HCT116 (cell line): ENCODE measurements at regions of chr1 and their contacts with region 1.

Region 1: DNA sequence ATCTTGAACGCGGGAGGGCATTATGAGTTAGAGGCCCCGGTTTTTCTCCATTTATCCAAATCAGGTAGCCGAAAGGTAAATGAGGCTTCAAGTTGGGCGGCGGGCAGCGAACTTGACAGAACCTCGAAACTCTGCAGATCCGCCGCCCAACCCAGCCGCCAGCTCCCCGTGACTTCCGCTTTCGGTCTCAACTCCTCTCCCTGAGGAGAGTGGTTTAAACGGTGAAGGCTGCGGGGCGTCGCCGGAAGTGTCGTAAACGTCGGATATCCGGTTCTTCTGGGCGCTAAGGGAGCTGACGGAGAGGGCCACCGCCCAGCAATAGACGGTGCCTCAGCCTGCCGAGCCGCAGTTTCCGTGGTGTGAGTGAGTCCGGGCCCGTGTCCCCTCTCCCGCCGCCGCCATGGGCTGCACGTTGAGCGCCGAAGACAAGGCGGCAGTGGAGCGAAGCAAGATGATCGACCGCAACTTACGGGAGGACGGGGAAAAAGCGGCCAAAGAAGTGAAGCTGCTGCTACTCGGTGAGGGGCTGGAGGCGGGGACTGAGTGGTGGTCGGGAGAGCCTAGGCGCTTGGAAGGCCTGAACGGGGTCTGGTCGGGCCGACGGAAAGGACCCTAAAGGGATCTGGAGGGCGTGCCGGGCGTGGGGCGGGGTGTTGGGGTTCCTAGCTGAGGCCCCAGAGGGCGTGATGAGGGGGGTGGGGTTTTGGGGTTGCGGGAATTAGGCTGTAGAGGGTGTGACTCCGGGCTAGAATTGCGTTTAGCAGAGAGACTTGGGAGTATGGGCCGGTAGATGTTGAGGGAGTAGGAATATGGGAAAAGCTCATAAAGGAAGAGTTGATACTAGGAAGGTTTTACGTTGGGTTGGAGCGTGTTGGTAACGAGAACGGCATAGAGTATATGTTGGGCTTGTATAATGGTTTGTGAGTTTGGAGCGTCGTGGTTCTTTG is at the start of gene GNAI3:
- DNase-seq: peak; percentile 92
- ATAC-seq: peak; percentile 91
- H3K4me3 ChIP-seq: peak within 1 kb of the TSS; percentile 86 to 98
- H3K27ac ChIP-seq: peak within 1 kb of the TSS; percentile 70
- H3K4me1 ChIP-seq: peaks cover 15 to 24% of the 10 kb centered on the region in 2 experiments
- H3K27me3 ChIP-seq: no peaks in the 10 kb centered on the region
- CTCF ChIP-seq: no peak
- POLR2A ChIP-seq: peak; percentile 95
- RAD21 ChIP-seq: no peak
- total RNA-seq, gene GNAI3: 9.5 TPM

Region 2: DNA sequence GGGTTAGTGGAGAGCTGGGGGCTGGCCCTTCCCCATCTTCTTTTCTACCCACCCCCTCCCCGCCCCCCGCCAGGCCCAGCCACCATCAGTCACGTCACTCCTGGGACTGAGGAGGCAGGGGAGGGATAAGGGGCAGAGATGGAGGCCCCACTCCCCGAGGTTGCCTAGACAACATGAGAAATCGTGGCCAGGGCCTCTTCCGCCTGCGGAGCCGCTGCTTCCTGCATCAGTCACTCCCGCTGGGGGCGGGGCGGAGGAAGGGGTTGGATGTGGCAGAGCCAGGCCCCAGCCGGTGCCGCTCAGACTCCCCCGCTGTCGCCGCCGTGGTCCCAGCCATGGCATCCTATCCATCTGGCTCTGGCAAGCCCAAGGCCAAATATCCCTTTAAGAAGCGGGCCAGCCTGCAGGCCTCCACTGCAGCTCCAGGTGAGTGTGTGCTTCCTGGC is 72.3 kb after region 1 on chr1:
- CTCF ChIA-PET with region 1: interaction called, 4 read pairs
- POLR2A ChIA-PET with region 1: interaction called, 17 read pairs
- RAD21 ChIA-PET with region 1: no interaction called
- intact Hi-C with region 1: no loop called
- DNase-seq: peak; percentile 48
- ATAC-seq: peak; percentile 80
- H3K4me3 ChIP-seq: peak overlapping the region; percentile 88 to 95
- H3K27ac ChIP-seq: peak overlapping the region; percentile 86
- H3K4me1 ChIP-seq: peaks cover 30 to 47% of the 10 kb centered on the region in 2 experiments; a peak in 3 of 4 replicates
- H3K27me3 ChIP-seq: no peaks in the 10 kb centered on the region
- CTCF ChIP-seq: no peak
- POLR2A ChIP-seq: no peak
- RAD21 ChIP-seq: no peak

Region 3: DNA sequence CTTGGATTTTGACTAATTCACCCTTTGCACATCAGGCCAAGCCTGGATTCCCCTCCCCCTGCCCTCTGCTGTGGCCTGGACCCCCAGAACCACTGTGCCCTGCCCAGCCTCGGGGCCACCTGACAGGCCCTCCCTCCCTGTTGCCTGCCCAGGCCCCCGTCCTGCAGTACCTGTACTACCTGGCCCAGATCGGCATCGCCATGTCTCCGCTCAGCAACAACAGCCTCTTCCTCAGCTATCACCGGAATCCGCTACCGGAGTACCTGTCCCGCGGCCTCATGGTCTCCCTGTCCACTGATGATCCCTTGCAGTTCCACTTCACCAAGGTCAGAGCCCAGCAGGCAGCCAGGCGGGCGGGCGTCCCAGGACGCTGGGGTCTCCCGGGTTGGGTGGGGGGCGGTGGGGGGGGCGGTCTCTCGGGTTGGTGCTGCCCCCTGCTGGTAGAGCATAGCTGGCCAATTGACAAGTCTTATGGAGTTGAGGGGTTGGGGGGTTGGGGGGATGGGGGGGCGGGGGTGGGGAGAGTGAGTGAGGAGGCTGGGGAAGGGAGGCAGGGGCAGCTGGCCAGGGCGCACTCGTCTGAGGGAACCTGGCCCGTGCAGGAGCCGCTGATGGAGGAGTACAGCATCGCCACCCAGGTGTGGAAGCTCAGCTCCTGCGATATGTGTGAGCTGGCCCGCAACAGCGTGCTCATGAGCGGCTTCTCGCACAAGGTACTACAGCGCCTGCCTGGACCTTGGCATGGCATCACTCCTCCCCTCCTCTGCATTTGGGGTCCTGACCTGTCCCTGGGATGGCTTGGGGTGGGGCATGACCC is 81.7 kb after region 1 on chr1:
- CTCF ChIA-PET with region 1: interaction called, 25 read pairs
- POLR2A ChIA-PET with region 1: interaction called, 5 read pairs
- RAD21 ChIA-PET with region 1: interaction called in 1 of 2 experiments, 8 read pairs
- intact Hi-C with region 1: loop called (anchors 1 kb)
- DNase-seq: no peak
- ATAC-seq: peak; percentile 28
- H3K4me3 ChIP-seq: no peak overlapping the region
- H3K27ac ChIP-seq: no peak overlapping the region
- H3K4me1 ChIP-seq: peaks cover 0 to 9% of the 10 kb centered on the region in 2 experiments; a peak in 1 of 4 replicates
- H3K27me3 ChIP-seq: no peaks in the 10 kb centered on the region
- CTCF ChIP-seq: peak in 1 of 3 experiments; percentile 9; a peak in 1 of 6 replicates
- POLR2A ChIP-seq: no peak
- RAD21 ChIP-seq: no peak

Region 4: DNA sequence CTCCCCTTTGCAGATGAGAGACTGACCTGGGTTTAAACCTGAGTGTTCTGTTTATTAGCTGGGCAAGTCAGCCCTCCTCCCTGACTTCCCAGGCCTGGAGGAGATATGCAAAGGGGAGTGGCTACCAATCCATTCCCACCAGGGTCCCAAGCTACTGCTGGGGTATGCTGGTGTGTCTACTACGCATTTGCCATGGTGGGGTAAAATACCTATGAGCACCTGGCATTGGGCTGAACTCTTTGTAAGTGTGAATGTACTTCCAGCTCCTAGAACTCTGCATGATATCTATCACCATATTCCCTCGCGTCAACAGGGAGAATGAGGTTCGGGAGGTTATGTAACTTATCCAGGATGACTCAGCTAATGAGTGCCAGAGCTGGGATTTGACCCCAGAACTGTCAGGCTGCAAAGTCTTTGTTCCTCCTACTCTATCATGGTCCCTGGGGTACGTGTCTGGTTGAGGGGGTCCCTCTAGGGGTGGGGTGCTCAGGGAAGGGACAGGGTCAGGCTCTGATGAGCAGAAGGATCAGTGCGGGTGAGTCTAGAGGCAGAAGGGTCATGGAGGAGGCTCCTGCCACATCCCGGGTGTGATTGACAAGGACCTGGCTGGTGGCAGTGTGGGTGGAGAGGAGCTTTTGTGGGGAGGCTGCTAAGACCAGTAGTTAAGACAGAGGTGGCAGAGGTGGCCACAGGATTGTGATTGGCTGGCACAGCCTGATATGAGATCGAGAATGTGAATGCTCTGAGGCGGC is 87.8 kb after region 1 on chr1:
- CTCF ChIA-PET with region 1: interaction called, 50 read pairs
- POLR2A ChIA-PET with region 1: interaction called, 11 read pairs
- RAD21 ChIA-PET with region 1: interaction called, 8 to 11 read pairs
- intact Hi-C with region 1: loop called (anchors 2 kb)
- DNase-seq: no peak
- ATAC-seq: peak; percentile 41; the same call in 1 of the 2 replicates
- H3K4me3 ChIP-seq: no peak overlapping the region
- H3K27ac ChIP-seq: no peak overlapping the region; the same call in 1 of the 2 replicates
- H3K4me1 ChIP-seq: peaks cover 12 to 19% of the 10 kb centered on the region in 2 experiments
- H3K27me3 ChIP-seq: no peaks in the 10 kb centered on the region
- CTCF ChIP-seq: no peak
- POLR2A ChIP-seq: no peak
- RAD21 ChIP-seq: no peak

Region 5: DNA sequence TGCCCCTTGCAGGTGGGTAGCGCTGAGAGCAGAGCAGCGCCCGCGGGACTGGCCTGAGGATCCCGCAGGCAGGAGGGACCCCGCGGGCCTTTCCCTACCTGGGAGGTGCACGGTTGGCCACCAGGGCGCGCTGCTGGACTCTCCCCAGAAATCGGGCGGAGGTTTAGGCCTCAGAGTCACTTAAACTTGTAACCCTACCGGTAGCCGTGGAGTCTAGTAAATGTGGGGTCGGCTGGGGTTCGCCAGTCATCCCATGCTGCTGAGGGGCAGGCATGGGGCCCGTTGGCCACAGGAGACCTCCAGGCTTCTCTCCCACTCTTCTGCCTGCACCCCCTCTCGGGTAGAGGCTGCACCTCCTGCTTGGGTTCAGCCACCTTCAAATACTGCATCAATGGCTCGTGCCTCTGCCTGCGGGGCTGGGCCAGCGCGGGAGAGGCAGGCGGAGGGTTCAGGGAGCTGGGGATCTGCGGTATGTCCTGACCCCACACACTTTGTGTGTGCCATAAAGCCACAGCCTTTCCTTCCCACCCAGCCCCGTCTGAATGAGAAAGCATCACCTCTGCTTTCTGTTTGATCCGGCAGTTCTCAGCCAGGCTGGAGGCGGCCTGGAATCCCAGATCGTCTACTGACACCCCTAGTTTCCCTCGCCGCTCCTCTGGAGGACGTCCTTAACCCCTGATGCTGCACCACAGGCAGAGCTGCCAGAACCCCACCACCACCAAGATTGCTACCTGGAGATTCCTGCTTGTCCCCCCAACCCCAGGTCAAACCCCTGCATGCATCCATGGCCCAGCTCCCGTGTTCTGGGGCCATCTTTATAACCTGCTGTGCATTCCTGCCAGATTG is 95.0 kb after region 1 on chr1:
- CTCF ChIA-PET with region 1: interaction called, 50 read pairs
- POLR2A ChIA-PET with region 1: interaction called, 8 read pairs
- RAD21 ChIA-PET with region 1: interaction called, 8 to 11 read pairs
- intact Hi-C with region 1: loop called (anchors 2 kb)
- DNase-seq: peak; percentile 60
- ATAC-seq: peak; percentile 95
- H3K4me3 ChIP-seq: peak overlapping the region; percentile 16 to 19; a peak in 3 of 4 replicates
- H3K27ac ChIP-seq: no peak overlapping the region; the same call in 1 of the 2 replicates
- H3K4me1 ChIP-seq: peaks cover 2 to 17% of the 10 kb centered on the region in 2 experiments
- H3K27me3 ChIP-seq: no peaks in the 10 kb centered on the region
- CTCF ChIP-seq: peak; percentile 87 to 93 (median 89)
- POLR2A ChIP-seq: no peak
- RAD21 ChIP-seq: peak; percentile 83

Region 6: DNA sequence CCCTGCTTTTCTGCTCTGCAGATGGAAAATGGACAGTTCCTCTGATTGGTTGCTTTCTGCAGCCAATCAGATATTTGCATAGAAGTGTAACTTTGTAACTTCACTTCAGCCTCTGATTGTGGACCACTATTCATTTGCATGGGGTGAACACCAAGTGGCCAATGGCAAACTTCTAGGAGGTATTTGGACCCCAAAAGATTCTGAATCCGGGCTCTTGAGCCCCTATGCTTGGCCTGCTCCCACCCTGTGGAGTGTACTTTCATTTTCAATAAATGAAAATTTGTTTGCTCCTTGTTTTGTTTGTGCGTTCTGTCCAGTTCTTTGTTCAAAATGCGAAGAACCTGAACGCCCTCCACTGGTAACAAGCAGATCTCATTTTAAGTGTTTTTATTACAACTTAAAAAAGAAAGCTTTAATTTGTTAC is 100.9 kb after region 1 on chr1:
- CTCF ChIA-PET with region 1: interaction called, 20 read pairs
- POLR2A ChIA-PET with region 1: interaction called, 8 read pairs
- RAD21 ChIA-PET with region 1: interaction called in 1 of 2 experiments, 3 read pairs
- intact Hi-C with region 1: loop called (anchors 1 kb)
- DNase-seq: peak; percentile 18
- ATAC-seq: peak; percentile 82
- H3K4me3 ChIP-seq: peak overlapping the region; percentile 8 to 42; a peak in 2 of 4 replicates
- H3K27ac ChIP-seq: no peak overlapping the region
- H3K4me1 ChIP-seq: peaks cover 0 to 3% of the 10 kb centered on the region in 2 experiments; a peak in 1 of 4 replicates
- H3K27me3 ChIP-seq: peaks cover 10% of the 10 kb centered on the region; the same call in 1 of the 2 replicates
- CTCF ChIP-seq: peak; percentile 33 to 45 (median 39); a peak in 4 of 6 replicates
- POLR2A ChIP-seq: no peak
- RAD21 ChIP-seq: peak; percentile 59

Region 7: DNA sequence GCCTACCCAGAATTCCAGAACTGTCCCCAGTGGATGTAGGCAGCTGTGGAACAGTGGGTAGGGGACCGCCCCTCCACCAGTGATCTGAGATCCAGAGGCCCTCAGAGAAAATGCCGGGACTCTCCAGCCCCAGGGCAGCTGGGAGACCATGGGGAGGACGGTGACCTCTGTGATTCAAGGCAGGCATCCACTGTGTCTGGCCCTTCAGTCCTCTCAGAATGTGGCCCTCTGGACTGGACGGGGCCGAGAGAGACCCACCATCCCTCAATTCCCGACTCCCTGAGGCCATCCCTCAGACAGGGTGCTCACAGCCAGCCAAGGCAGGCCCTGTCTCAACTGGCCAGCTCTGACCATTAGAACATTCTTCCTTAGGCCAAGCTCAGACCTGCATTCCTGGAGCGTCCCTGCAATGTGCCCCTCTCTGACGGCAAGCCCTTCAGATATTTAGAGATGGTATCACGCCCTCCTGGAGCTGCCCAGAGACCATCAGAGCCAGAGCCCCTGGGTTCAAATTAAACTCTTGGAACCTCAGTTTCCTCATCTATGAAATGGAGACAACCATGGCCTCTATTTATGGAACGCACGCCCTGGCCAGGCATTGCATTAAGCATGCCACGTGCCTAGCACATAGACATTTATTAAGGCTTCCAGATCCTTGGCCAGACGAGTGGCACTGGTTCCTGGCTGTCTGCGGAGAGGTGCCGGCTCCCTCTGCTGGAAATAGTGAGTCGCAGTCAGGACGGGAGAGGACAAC is 224.7 kb after region 1 on chr1:
- CTCF ChIA-PET with region 1: interaction called, 34 read pairs
- POLR2A ChIA-PET with region 1: interaction called, 7 read pairs
- RAD21 ChIA-PET with region 1: interaction called, 6 read pairs
- intact Hi-C with region 1: loop called (anchors 1 kb)
- DNase-seq: peak; percentile 70
- ATAC-seq: peak; percentile 92
- H3K4me3 ChIP-seq: no peak overlapping the region
- H3K27ac ChIP-seq: no peak overlapping the region
- H3K4me1 ChIP-seq: peaks cover 0 to 18% of the 10 kb centered on the region in 2 experiments; a peak in 2 of 4 replicates
- H3K27me3 ChIP-seq: no peaks in the 10 kb centered on the region
- CTCF ChIP-seq: peak; percentile 85 to 97 (median 92)
- POLR2A ChIP-seq: no peak
- RAD21 ChIP-seq: peak; percentile 99